BJ (cell line): ENCODE measurements at regions of chr1 and their contacts with region 1.

Region 1: GRCh38 chr1:8660411-8660828 is 157.0 kb downstream of the RERE start:
- DNase-seq: peak; percentile 58
- H3K4me3 ChIP-seq: no peak overlapping the region
- H3K27me3 ChIP-seq: no peaks in the 10 kb centered on the region
- CTCF ChIP-seq: no peak

Region 2: GRCh38 chr1:8487249-8487648 is 173.2 kb before region 1 on chr1:
- CTCF ChIA-PET with region 1: no interaction called
- POLR2A ChIA-PET with region 1: interaction called, 14 read pairs
- DNase-seq: no peak
- H3K4me3 ChIP-seq: no peak overlapping the region
- H3K27me3 ChIP-seq: no peaks in the 10 kb centered on the region
- CTCF ChIP-seq: no peak

Region 3: GRCh38 chr1:8641377-8641997 is 18.9 kb before region 1 on chr1:
- CTCF ChIA-PET with region 1: no interaction called
- POLR2A ChIA-PET with region 1: no interaction called
- DNase-seq: no peak
- H3K4me3 ChIP-seq: no peak overlapping the region
- H3K27me3 ChIP-seq: no peaks in the 10 kb centered on the region
- CTCF ChIP-seq: no peak